Heart left ventricle (tissue), 16 donors: ENCODE measurements at regions of chr1 and their contacts with region 1.

Region 1: DNA sequence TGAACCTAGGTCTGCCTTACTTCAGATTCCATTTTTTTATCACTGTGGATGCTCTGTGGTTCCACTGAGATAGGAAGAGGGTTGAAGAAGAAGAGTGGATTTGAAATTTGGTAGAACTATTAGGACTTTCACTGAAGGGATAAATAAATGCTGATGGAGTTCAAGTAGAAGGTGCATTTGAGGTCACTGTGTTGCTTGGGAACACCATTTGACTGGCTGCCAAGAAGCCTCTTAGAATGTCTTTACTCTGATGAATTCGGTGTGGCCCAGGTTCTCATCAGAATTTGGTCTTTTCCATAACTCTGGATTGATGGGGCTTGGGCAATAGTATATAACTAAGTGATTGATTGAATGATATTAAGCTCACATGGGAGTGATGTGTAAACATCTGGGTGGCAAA is 11.9 kb downstream of the XPR1 start:
- DNase-seq: peak in 4 of 5 donors; percentile 35 to 46 (median 40)
- ATAC-seq: peak in 3 of 4 donors; percentile 32 to 57 (median 57)
- H3K4me3 ChIP-seq: no peak overlapping the region
- H3K27ac ChIP-seq: peak overlapping the region in 1 of 12 donors; percentile 48
- H3K4me1 ChIP-seq: peaks cover 0 to 91% (median 26%) of the 10 kb centered on the region in 12 donors
- H3K27me3 ChIP-seq: no peaks in the 10 kb centered on the region
- CTCF ChIP-seq: no peak
- POLR2A ChIP-seq: no peak

Region 2: DNA sequence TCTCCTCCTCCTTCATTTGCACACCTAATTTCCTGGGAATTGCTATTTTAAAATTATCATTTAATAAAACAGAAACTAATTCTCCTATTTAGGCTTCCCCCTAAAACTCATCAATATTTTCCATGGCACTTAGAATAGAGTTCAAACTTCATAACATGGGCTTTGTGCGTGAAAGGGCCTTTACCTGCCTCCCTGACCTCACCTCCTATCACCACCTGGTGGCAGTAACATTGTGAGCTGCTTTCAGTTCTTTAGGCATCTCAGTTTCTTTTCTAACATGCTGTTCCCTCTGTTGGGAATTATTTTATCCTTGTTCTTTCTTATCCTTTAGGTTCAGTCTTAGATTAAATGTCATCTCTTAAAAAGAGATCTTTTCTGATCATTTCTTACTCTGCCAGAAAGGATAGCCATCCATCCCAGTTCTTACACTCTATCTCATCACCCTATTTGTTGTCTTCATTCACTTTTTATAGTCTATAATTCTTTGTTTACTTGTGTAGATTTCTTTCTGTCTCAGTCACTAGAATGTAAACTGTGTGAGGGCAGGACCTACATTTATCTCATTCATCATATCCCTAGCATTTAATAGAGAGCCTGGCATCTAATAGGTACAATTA is 135.2 kb after region 1 on chr1:
- intact Hi-C with region 1: loop called in 1 of 10 experiments (anchors 10 kb)
- DNase-seq: no peak
- ATAC-seq: no peak
- H3K4me3 ChIP-seq: no peak overlapping the region
- H3K27ac ChIP-seq: no peak overlapping the region
- H3K4me1 ChIP-seq: peaks cover 0 to 27% (median 6%) of the 10 kb centered on the region in 12 donors
- H3K27me3 ChIP-seq: no peaks in the 10 kb centered on the region
- CTCF ChIP-seq: peak in 4 of 12 donors; percentile 7 to 28 (median 18)
- POLR2A ChIP-seq: no peak